PC-9 (cell line): ENCODE measurements at regions of chr19 and their contacts with region 1.

Region 1: DNA sequence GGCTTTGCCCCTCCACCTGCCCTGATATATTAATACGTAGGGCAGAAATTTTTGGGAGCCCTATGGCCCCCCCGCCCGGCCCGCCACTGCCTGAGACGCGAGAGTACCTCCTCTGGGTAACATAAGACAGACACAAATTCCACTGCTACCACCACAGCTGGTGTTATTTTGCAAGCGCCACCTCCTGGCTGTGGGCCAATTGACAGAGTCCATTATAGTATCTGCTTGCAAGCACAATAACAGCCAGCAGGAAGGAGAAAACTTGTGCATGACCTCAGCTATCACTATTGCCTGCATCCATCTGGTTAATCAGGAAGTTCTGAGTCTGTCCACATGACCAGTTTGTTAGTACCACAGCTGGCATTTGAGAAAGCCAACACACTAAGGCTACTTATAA is 25.3 kb upstream of the OR10H2 start:
- DNase-seq: peak; percentile 85 to 97
- H3K4me3 ChIP-seq: no peak overlapping the region
- H3K27ac ChIP-seq: no peak overlapping the region; the same call in 1 of the 2 replicates
- H3K4me1 ChIP-seq: peaks cover 19% of the 10 kb centered on the region
- H3K27me3 ChIP-seq: peaks cover 7% of the 10 kb centered on the region; the same call in 1 of the 2 replicates
- CTCF ChIP-seq: 0 out of 2 replicates have a peak, but pooled peaks have one; percentile 28

Region 2: GRCh38 chr19:15640294-15640903 is 62.1 kb before region 1 on chr19 and contains the start of gene CYP4F3:
- CTCF ChIA-PET with region 1: no interaction called
- POLR2A ChIA-PET with region 1: interaction called, 5 read pairs
- intact Hi-C with region 1: loop called (anchors 1 kb)
- DNase-seq: peak; percentile 98
- H3K4me3 ChIP-seq: peak within 1 kb of the TSS; percentile 32; the same call in 1 of the 2 replicates
- H3K27ac ChIP-seq: peak within 1 kb of the TSS; percentile 95
- H3K4me1 ChIP-seq: peaks cover 48% of the 10 kb centered on the region
- H3K27me3 ChIP-seq: no peaks in the 10 kb centered on the region
- CTCF ChIP-seq: no peak
- total RNA-seq, gene CYP4F3: 57.6 and 70.7 TPM in 2 replicates

Region 3: GRCh38 chr19:15672580-15673175 is 29.9 kb before region 1 on chr19 and contains the start of gene CYP4F12:
- CTCF ChIA-PET with region 1: no interaction called
- POLR2A ChIA-PET with region 1: no interaction called
- intact Hi-C with region 1: loop called (anchors 1 kb)
- DNase-seq: peak; percentile 82 to 92
- H3K4me3 ChIP-seq: peak within 1 kb of the TSS; percentile 13; the same call in 1 of the 2 replicates
- H3K27ac ChIP-seq: peak within 1 kb of the TSS; percentile 63
- H3K4me1 ChIP-seq: peaks cover 14% of the 10 kb centered on the region
- H3K27me3 ChIP-seq: no peaks in the 10 kb centered on the region
- CTCF ChIP-seq: no peak
- total RNA-seq, gene CYP4F12: 5.7 and 8.1 TPM in 2 replicates

Region 4: DNA sequence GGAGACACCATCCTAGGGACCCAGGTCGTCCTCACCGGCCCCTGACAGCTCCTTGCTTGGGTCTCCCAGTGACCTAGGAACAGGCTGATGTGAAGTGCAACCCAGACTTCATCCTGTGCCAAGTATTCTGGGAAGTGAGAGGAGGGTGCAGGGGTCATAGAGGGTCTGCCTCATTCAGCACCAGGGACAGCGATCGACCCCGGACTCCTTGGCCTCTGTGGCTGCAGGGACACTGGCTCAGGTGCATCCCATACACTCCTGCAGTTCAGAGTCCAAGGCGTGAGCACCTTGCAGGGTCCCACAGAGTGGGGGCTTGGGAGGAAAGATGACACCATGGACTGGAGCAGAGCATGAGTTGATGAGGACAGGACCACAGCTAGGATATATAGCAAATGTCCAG is 15.3 kb after region 1 on chr19:
- CTCF ChIA-PET with region 1: no interaction called
- POLR2A ChIA-PET with region 1: no interaction called
- intact Hi-C with region 1: no loop called
- DNase-seq: no peak
- H3K4me3 ChIP-seq: no peak overlapping the region
- H3K27ac ChIP-seq: no peak overlapping the region
- H3K4me1 ChIP-seq: no peaks in the 10 kb centered on the region
- H3K27me3 ChIP-seq: peaks cover 58% of the 10 kb centered on the region
- CTCF ChIP-seq: no peak

Region 5: GRCh38 chr19:15923702-15924101 is 221.2 kb after region 1 on chr19:
- CTCF ChIA-PET with region 1: no interaction called
- POLR2A ChIA-PET with region 1: interaction called, 27 read pairs
- intact Hi-C with region 1: no loop called
- DNase-seq: no peak
- H3K4me3 ChIP-seq: no peak overlapping the region
- H3K27ac ChIP-seq: no peak overlapping the region
- H3K4me1 ChIP-seq: no peaks in the 10 kb centered on the region
- H3K27me3 ChIP-seq: no peaks in the 10 kb centered on the region
- CTCF ChIP-seq: no peak